ENCODE measurements at regions of chr4 and their contacts with region 1.

Region 1: GRCh38 chr4:20684852-20685763 is 15.2 kb upstream of the PACRGL start:
- DNase-seq: peak; percentile 38
- ATAC-seq: no peak
- H3K4me3 ChIP-seq: no peak overlapping the region
- H3K4me3 Mint-ChIP-seq: no peak overlapping the region
- H3K27ac ChIP-seq: no peak overlapping the region
- H3K27ac Mint-ChIP-seq: no peak overlapping the region
- H3K4me1 ChIP-seq: no peaks in the 10 kb centered on the region
- H3K4me1 Mint-ChIP-seq: no peaks in the 10 kb centered on the region
- H3K27me3 ChIP-seq: peaks cover 0 to 6% (median 0%) of the 10 kb centered on the region in 4 experiments
- H3K27me3 Mint-ChIP-seq: peaks cover 14% of the 10 kb centered on the region
- CTCF ChIP-seq: peak; percentile 89

Region 2: GRCh38 chr4:18689308-18690115 is 1995.6 kb before region 1 on chr4:
- CTCF ChIA-PET with region 1: interaction called, 10 read pairs
- POLR2A ChIA-PET with region 1: no interaction called
- intact Hi-C with region 1: loop called (anchors 1 kb)
- DNase-seq: peak; percentile 48
- ATAC-seq: peak; percentile 28
- H3K4me3 ChIP-seq: no peak overlapping the region
- H3K4me3 Mint-ChIP-seq: no peak overlapping the region
- H3K27ac ChIP-seq: no peak overlapping the region
- H3K27ac Mint-ChIP-seq: no peak overlapping the region
- H3K4me1 ChIP-seq: no peaks in the 10 kb centered on the region
- H3K4me1 Mint-ChIP-seq: no peaks in the 10 kb centered on the region
- H3K27me3 ChIP-seq: peaks cover 0 to 3% (median 0%) of the 10 kb centered on the region in 4 experiments
- H3K27me3 Mint-ChIP-seq: peaks cover 3% of the 10 kb centered on the region
- CTCF ChIP-seq: peak; percentile 97

Region 3: GRCh38 chr4:20422398-20422797 is 262.7 kb before region 1 on chr4:
- CTCF ChIA-PET with region 1: interaction called, 5 read pairs
- POLR2A ChIA-PET with region 1: no interaction called
- intact Hi-C with region 1: loop called (anchors 1 kb)
- DNase-seq: peak; percentile 22
- ATAC-seq: peak; percentile 51
- H3K4me3 ChIP-seq: no peak overlapping the region
- H3K4me3 Mint-ChIP-seq: no peak overlapping the region
- H3K27ac ChIP-seq: no peak overlapping the region
- H3K27ac Mint-ChIP-seq: no peak overlapping the region
- H3K4me1 ChIP-seq: no peaks in the 10 kb centered on the region
- H3K4me1 Mint-ChIP-seq: peaks cover 8% of the 10 kb centered on the region
- H3K27me3 ChIP-seq: no peaks in the 10 kb centered on the region
- H3K27me3 Mint-ChIP-seq: peaks cover 11% of the 10 kb centered on the region
- CTCF ChIP-seq: peak; percentile 36

Region 4: DNA sequence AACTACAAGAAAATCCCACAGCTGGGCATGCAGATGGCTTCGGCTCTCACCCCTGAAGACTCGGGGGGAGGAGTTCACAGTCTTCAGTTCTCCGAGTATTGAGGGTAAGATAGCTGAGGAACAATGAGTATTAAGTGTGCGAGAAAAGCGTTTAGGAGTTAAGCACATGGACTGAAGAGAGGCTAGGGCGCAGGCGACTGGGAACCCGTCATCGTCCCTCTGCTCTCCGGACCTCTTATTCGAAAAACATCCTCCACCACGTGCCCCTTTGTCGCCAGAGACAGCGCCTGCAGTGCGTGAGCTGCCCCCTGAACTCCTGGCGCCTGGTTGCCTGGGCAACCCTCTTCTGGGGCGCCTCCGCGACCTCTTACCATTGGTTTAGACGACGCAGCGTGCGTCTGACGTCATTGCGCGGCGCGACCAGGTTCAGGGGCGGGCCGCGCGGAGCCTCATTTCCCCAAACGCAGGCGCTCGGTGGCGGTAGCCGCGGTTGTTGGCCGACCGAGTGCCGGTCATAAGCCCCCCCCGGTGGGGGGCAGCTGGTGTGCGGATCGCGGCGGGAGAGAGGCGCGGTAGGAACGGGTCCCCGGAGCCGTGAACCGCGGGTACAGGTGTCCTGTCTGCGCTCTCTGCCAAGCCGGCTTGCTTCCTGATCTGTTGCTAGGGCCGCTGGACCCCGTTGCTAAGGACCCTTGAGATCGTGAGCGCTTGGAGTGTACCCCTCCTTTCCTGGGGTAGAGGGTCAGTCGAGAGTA is 15.1 kb after region 1 on chr4 and contains the start of gene PACRGL:
- CTCF ChIA-PET with region 1: interaction called, 22 read pairs
- POLR2A ChIA-PET with region 1: no interaction called
- intact Hi-C with region 1: no loop called
- DNase-seq: peak; percentile 96
- ATAC-seq: peak; percentile 96
- H3K4me3 ChIP-seq: peak within 1 kb of the TSS; percentile 62 to 95 (median 80)
- H3K4me3 Mint-ChIP-seq: peak within 1 kb of the TSS; percentile 97
- H3K27ac ChIP-seq: peak within 1 kb of the TSS; percentile 65 to 83
- H3K27ac Mint-ChIP-seq: peak within 1 kb of the TSS; percentile 94
- H3K4me1 ChIP-seq: peaks cover 11 to 15% of the 10 kb centered on the region in 2 donors
- H3K4me1 Mint-ChIP-seq: peaks cover 25% of the 10 kb centered on the region
- H3K27me3 ChIP-seq: peaks cover 0 to 7% (median 0%) of the 10 kb centered on the region in 4 experiments
- H3K27me3 Mint-ChIP-seq: peaks cover 6% of the 10 kb centered on the region
- CTCF ChIP-seq: no peak
- total RNA-seq, gene PACRGL: 17.1 and 18.7 TPM in 2 replicates

Region 5: DNA sequence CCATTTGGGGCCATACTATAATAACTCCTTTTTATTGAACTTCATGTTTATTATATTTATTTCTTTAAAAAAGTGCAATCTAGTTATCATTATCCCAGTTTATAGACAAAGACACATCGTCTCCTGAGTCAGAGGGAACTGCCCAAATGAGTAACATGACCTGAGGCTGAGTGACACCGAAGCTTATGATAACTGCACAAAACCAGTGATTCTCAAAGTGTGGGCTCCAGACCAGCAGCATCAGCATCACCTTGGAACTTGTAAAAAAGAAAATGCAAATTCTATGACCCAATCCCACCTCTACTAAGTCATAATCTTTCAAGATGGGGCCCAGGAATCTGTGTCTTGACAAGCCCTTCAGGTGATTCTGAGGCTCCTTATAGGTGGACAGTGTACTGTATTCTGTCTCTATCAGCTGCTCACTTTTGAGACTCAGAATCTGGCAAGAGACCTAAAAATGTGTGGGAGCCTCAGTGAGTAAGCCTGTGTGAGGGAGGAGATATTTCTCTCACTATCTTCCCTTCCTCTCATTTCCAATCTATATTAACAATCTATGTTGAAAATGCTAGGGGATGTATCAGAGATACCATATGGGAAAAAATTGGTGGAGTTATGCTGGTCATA is 162.1 kb after region 1 on chr4:
- CTCF ChIA-PET with region 1: no interaction called
- POLR2A ChIA-PET with region 1: no interaction called
- intact Hi-C with region 1: no loop called
- DNase-seq: no peak
- ATAC-seq: no peak
- H3K4me3 ChIP-seq: no peak overlapping the region
- H3K4me3 Mint-ChIP-seq: no peak overlapping the region
- H3K27ac ChIP-seq: no peak overlapping the region
- H3K27ac Mint-ChIP-seq: no peak overlapping the region
- H3K4me1 ChIP-seq: no peaks in the 10 kb centered on the region
- H3K4me1 Mint-ChIP-seq: no peaks in the 10 kb centered on the region
- H3K27me3 ChIP-seq: no peaks in the 10 kb centered on the region
- H3K27me3 Mint-ChIP-seq: no peaks in the 10 kb centered on the region
- CTCF ChIP-seq: no peak

Measured in B cell (primary cell).